Dendritic cell treated with granulocyte-macrophage colony-stimulating factor and Interleukin-4, amounts not matched to agents 40 ng/mL and 50 ng/mL, for 4 days (primary cell): ENCODE measurements at regions of chr7 and their contacts with region 1.

Region 1: GRCh38 chr7:148286150-148286549 is 304.4 kb upstream of the C7orf33 start:
- H3K4me3 Mint-ChIP-seq: no peak overlapping the region
- H3K27ac Mint-ChIP-seq: no peak overlapping the region
- H3K4me1 Mint-ChIP-seq: no peaks in the 10 kb centered on the region
- H3K27me3 Mint-ChIP-seq: no peaks in the 10 kb centered on the region

Region 2: DNA sequence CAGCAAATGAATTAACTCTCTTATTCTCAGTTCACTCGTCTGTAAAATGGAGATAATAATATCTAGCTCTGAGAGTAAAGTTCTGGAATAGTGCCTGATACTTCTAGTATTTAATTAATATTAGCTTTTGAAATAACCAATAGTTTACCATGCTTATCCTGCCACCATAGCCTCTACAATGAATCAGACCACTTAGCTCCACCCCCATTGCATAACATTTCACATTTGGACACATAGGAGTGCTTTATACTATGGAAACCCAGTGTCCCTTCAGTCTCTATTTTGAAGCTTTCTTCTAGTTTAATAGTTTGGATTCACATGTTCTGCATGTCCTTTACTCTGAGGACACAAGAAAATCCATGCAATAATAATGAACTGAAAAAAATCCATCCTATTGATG is 122.9 kb before region 1 on chr7:
- intact Hi-C with region 1: no loop called
- H3K4me3 Mint-ChIP-seq: no peak overlapping the region
- H3K27ac Mint-ChIP-seq: no peak overlapping the region
- H3K4me1 Mint-ChIP-seq: no peaks in the 10 kb centered on the region
- H3K27me3 Mint-ChIP-seq: no peaks in the 10 kb centered on the region

Region 3: DNA sequence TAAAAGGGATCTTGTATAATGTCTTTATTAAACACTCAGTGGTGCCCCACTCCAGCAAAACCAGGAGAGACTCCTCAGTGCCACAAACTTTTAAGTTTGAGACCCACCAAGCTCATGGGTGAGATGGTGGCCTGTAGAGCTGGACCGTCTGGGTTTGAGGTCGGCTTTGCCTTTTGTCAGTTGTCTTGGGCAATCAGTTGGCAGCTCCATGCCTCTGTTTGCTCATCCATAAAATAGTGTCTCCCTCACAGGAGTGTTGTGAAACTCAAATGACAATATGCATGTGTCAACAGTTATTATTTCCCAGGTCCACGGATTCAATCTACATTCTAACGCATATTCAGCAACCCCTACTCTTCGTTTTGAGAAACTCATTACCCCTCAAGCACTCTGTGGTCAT is 63.4 kb before region 1 on chr7:
- intact Hi-C with region 1: loop called (anchors 10 kb)
- H3K4me3 Mint-ChIP-seq: no peak overlapping the region
- H3K27ac Mint-ChIP-seq: no peak overlapping the region
- H3K4me1 Mint-ChIP-seq: no peaks in the 10 kb centered on the region
- H3K27me3 Mint-ChIP-seq: no peaks in the 10 kb centered on the region

Region 4: DNA sequence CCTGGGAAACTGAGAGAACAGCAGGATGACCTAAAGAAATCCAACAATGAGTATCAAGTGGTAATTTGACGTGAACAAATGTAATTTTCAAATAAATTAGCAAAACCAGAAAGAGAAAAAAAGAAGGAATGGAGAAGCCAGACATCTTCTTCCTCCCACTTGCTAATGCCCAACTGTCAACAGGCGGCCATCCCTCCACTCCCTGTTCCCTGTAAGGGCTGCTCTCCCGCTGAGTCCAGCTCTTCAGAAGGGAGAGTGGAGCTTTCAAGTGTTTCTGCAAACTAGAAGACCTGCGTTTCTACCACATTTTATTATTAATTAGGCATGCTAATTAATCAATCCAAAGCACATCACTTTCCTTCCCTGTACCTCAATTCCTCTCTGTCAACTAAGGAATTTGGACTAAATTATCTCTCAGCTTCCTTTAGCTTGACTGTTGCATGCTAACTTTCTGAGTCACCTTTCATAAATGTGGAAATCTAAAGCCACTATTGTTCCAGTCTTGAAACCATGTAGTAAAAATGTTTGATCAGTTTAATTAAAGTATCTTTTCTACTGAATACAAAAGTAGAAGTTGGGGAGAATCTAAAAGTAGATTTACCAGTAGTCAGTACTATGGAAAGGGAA is 364.2 kb after region 1 on chr7:
- intact Hi-C with region 1: no loop called
- H3K4me3 Mint-ChIP-seq: no peak overlapping the region
- H3K27ac Mint-ChIP-seq: no peak overlapping the region
- H3K4me1 Mint-ChIP-seq: no peaks in the 10 kb centered on the region
- H3K27me3 Mint-ChIP-seq: peaks cover 3% of the 10 kb centered on the region

Region 5: GRCh38 chr7:148994601-148995000 is 708.5 kb after region 1 on chr7:
- intact Hi-C with region 1: no loop called
- H3K4me3 Mint-ChIP-seq: no peak overlapping the region
- H3K27ac Mint-ChIP-seq: peak overlapping the region; percentile 56
- H3K4me1 Mint-ChIP-seq: no peaks in the 10 kb centered on the region
- H3K27me3 Mint-ChIP-seq: no peaks in the 10 kb centered on the region